AG04450 (cell line): ENCODE measurements at regions of chr5 and their contacts with region 1.

Region 1: DNA sequence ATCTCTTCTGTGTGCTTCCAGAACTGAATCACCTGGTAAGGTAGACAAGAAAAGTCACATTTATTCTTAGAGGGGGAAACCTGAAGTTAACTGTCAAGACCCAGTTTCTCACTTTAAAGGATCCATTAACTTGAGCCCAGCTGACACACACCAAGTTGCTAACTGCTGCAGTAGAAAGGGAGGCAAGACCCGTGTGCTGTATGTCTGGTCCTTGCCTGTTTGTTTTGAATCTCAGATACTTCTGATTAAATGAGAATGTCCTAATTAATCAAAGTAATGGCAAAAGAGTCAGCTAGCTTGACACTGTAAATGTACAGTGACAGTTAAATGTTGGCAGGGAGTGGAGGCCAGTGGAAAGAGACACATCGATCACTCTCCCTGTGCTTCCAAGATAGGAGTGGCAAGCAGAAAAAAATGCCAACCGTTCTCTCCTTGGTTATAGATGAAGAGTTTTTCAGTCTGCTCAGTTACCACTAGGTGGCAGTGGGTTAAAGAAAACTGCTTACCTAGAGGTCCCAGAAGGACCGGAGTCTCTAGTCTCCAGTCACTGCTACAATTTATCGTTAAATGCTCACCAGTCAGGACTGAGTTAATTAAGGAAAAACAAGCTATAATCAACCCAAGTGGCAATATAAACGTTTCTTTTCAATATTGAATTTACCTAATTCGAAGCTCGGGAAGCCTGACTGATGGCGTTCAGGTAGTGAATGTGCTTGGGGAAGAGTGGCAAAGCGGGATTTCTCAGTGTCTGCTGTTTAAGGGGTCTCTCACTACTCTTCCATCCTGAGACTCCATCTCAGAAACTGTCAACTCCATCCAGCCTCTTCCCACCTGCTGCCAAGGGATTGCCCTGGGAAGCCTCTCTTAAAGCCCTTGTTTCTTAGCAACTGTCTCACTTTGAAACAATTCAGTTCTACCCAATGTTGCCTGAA is 18.4 kb downstream of the LSM11 start:
- DNase-seq: no peak
- H3K4me3 ChIP-seq: no peak overlapping the region
- H3K27ac ChIP-seq: no peak overlapping the region
- H3K27me3 ChIP-seq: no peaks in the 10 kb centered on the region
- CTCF ChIP-seq: peak; percentile 82

Region 2: DNA sequence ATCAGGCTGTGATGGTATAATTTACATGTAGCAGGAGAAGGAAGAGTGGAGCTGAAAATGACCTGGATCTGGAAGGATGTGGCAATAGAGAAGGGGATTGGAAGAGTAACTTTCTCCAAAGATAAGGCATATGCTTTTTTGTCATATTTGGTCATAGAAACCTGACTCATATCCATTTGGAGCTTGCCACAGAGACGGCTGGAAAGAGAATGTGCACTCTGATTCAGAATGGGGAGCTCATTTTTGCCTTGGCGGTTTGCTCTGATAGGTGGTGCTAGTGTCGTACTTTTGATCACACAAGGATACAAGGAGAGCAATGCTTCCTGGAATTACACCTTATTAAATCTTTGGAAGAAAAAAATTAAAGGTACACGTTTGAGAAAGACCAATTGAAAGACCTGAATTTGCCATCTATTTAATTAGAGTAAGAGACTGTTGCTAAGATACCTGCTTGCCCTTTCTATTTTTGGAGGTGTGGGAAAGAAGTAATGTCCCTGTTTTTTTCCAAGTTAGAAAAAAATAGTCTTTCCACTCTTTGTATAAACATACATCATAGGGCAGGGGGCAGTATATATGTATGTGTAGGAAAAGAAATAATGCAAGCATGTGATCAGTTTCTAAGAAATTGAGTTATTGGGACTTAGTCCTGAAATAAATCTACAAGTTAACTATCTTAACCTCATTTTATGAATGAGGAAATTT is 13.0 kb before region 1 on chr5:
- CTCF ChIA-PET with region 1: interaction called, 31 read pairs
- POLR2A ChIA-PET with region 1: no interaction called
- DNase-seq: peak; percentile 56
- H3K4me3 ChIP-seq: no peak overlapping the region
- H3K27ac ChIP-seq: peak overlapping the region; percentile 77
- H3K27me3 ChIP-seq: no peaks in the 10 kb centered on the region
- CTCF ChIP-seq: no peak

Region 3: DNA sequence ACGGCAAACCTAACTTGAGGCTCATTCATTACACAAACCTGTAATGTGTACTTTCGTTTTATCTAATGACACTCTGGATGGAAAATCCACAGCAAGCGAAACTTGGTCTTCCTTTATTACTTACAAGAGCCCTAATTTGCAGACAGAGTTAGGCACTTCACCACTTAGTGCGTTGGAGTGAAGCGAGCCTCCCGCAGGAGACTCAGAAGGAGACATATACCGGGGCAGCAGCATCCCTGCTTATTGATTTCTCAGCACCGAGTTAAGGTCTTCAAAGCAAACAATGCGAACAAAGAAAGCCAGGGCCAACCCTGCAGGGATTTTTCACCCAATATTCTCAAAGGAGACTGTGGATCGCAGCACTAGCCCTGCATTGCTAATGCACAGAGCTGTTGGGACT is 10.2 kb after region 1 on chr5:
- CTCF ChIA-PET with region 1: interaction called, 60 read pairs
- POLR2A ChIA-PET with region 1: no interaction called
- DNase-seq: no peak
- H3K4me3 ChIP-seq: no peak overlapping the region
- H3K27ac ChIP-seq: no peak overlapping the region
- H3K27me3 ChIP-seq: peaks cover 5% of the 10 kb centered on the region
- CTCF ChIP-seq: no peak

Region 4: DNA sequence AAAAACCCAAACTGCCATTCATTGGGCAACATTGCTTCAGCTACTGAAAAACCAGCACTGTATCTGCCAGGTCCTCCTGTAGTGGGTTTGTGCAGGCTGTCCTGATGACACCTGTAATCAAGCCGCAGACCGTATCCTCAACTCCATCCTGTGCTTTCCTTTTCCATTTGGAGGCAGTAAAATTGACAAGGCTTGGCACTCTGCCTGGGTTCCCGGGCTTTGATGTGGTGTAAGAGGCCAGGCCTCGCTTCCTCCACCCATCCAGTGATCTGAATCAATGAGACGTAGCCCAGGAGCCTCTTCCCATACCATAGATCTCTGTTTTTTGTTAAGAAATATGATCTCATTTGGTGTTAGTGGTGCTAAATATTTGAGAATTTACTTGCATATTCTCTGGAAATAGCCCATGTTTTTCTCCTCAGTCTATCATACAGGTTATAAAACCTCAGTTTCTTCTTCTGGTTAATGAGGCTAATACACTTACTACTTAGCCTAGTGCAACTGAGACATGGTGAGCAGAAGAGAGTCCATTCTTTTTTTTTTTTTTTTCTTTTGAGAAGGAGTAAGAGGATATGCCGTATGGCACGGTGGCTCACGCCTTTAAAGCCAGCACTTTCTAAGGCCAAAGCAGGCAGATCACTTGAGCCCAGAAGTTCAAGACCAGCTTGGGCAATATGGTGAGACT is 16.3 kb after region 1 on chr5:
- CTCF ChIA-PET with region 1: interaction called, 60 read pairs
- POLR2A ChIA-PET with region 1: no interaction called
- DNase-seq: no peak
- H3K4me3 ChIP-seq: no peak overlapping the region
- H3K27ac ChIP-seq: no peak overlapping the region
- H3K27me3 ChIP-seq: peaks cover 2% of the 10 kb centered on the region
- CTCF ChIP-seq: no peak

Region 5: DNA sequence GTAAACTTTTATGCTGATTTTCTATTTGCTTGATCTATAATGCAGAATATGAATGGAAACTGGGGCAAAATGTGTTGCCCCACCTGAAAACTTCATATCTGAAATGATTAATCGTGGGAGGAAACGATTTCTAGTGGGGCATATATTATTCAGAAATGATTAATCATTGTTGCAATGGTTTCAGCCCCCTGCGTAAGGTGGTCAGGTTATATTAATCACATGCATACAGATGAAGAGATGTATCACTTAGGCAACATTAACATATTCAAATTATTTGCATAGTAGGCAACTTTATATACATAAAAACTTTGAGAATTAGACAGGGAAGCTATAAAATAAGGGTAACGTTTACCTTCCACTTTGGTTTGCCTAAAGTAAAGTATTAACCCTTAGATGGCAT is 31.3 kb after region 1 on chr5:
- CTCF ChIA-PET with region 1: interaction called, 19 read pairs
- POLR2A ChIA-PET with region 1: no interaction called
- DNase-seq: no peak
- H3K4me3 ChIP-seq: no peak overlapping the region
- H3K27ac ChIP-seq: no peak overlapping the region
- H3K27me3 ChIP-seq: no peaks in the 10 kb centered on the region
- CTCF ChIP-seq: no peak

Region 6: GRCh38 chr5:157890836-157891597 is 129.1 kb after region 1 on chr5:
- CTCF ChIA-PET with region 1: no interaction called
- POLR2A ChIA-PET with region 1: no interaction called
- DNase-seq: no peak
- H3K4me3 ChIP-seq: no peak overlapping the region
- H3K27ac ChIP-seq: no peak overlapping the region
- H3K27me3 ChIP-seq: no peaks in the 10 kb centered on the region
- CTCF ChIP-seq: no peak